ENCODE measurements at regions of chr2 and their contacts with region 1.

Region 1: GRCh38 chr2:43226558-43226954 is at the start of gene ZFP36L2:
- DNase-seq: no peak
- H3K4me3 ChIP-seq: peak within 1 kb of the TSS; percentile 95
- H3K27me3 ChIP-seq: no peaks in the 10 kb centered on the region
- CTCF ChIP-seq: no peak
- polyA plus RNA-seq, gene ZFP36L2: 4.0 and 6.9 TPM in 2 replicates

Region 2: DNA sequence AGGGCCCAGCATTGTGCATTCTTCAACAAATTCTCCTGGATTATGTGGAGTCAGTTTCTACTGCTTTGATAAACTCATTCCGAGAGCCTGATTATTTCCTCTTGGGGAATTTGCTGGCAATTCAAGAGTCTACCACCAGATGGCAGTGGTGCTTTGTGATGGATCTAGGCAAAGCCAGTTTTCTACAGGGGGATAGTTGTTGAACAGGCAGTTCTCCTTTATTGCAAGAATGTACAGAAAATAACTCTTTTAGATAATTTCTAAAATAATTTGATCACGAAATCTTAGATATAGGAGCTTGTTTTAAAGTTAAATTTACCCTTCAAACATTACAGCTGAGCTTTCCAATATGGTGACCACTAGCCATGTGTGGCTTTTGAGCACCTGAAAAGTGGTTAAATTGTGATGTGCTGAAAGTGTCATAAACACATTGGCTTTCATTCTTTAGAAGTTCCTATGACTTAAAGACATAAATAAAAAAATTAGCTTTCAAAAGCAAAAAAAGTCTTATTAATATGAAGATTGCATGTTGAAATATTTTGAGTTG is 367.5 kb before region 1 on chr2:
- CTCF ChIA-PET with region 1: interaction called, 23 read pairs
- POLR2A ChIA-PET with region 1: interaction called, 3 read pairs
- DNase-seq: no peak
- H3K4me3 ChIP-seq: no peak overlapping the region
- H3K27me3 ChIP-seq: no peaks in the 10 kb centered on the region
- CTCF ChIP-seq: peak; percentile 91

Region 3: GRCh38 chr2:42964439-42965083 is 262.0 kb before region 1 on chr2:
- CTCF ChIA-PET with region 1: interaction called, 13 read pairs
- POLR2A ChIA-PET with region 1: no interaction called
- DNase-seq: peak; percentile 85
- H3K4me3 ChIP-seq: no peak overlapping the region
- H3K27me3 ChIP-seq: no peaks in the 10 kb centered on the region
- CTCF ChIP-seq: no peak

Region 4: DNA sequence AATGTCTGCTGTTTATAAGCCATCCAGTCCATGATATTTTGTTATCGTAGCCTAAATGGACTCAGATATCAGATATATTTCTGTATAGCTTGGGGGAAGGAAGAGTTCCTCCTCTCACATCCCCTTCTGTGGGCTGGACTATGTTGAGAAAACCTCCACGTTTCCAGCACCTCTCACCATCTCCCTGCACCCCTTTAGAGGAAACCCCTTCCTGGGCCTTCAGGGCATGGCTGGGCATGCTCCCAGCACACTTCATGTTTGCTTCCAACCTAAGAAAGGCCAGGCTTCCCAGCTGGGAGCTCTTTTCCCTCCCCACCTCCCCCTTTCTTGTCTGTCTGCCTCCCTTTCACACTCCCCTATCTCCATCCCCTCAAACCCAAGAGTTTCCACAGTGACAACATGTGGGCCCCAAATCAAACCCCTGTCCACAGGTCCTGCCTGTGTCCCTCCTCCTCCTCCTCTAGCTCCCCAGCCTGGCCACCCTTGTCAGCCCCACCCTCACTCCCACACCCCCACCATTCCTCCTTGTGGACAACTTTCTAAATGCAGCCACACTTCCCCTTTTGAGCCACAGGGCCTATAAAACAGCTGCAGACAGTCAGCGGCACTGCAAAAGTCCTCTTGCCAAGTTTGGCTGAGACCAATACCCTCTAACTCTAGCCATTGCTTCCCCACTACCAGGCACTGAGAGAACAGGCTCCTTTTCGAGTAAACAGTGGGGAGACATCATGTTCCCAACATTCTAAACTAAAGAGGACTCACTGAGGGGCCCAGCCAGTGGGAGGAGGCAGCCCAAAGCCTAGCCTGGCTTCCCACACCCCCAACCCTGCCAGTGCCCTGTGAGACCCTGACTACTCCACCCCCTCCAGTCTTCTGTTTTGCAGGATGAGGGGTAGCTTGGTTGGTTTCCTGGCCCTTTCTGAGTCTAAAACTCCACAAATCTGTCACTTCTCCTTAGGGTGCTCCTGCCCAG is 120.7 kb before region 1 on chr2:
- CTCF ChIA-PET with region 1: interaction called, 4 read pairs
- POLR2A ChIA-PET with region 1: interaction called, 10 read pairs
- DNase-seq: no peak
- H3K4me3 ChIP-seq: no peak overlapping the region
- H3K27me3 ChIP-seq: no peaks in the 10 kb centered on the region
- CTCF ChIP-seq: peak; percentile 64

Region 5: DNA sequence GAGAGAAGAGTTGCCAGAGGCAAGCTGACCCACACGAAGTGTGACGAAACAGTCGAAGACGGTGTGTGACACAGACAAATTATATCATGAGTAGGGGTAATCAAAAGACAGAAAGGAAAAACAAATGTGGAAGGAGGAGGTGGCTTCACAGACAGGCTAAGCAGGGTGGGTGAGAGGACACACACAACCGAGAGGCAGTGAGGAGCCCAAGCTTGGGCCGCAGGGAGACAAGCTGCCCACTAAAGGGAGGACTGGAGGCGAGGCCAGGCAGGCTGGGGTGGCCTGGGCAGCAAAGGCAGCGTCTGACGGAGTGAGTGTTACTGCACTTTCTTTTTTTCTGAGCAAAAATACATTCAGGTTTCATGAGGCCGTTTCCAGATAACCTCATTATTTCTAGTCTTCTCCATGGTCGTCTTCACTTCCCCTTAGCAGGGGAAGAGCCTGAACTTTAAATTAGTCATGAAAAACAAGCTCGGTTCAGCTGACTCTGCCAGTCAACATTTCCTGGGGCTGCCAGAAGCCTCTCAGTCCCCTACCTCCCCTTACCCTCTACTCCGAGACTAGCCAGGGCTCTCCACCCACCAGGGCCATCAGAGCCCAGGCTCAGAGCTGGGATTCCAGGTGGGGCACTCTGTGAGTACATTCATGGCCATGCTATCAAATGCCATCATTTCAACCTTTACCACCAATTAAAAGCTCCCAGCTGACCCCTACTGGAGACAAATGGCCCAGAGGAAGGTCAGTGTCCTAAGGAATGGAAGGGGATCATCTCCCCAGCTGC is 13.6 kb after region 1 on chr2:
- CTCF ChIA-PET with region 1: interaction called, 19 read pairs
- POLR2A ChIA-PET with region 1: no interaction called
- DNase-seq: no peak
- H3K4me3 ChIP-seq: no peak overlapping the region
- H3K27me3 ChIP-seq: no peaks in the 10 kb centered on the region
- CTCF ChIP-seq: peak; percentile 21; the same call in 1 of the 2 replicates

Region 6: DNA sequence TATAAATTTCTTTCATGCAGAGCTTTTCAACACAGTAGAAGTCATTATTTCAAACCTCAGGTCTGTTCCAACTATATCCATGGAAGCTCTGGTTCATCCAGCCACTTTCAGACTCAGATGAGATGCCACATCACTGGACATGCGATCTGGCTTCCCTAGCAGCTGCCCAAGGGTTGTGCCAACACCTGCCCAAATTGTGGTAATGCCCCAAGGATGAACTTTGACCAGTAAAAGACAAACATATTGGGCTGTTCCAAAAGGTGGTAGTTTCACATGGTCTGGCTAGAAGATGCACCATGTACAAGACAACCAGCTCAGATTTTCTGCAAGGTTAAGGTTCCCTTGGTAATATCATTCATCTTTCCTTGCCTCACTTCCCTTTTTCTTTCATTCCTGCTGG is 267.4 kb after region 1 on chr2:
- CTCF ChIA-PET with region 1: no interaction called
- POLR2A ChIA-PET with region 1: no interaction called
- DNase-seq: no peak
- H3K4me3 ChIP-seq: no peak overlapping the region
- H3K27me3 ChIP-seq: no peaks in the 10 kb centered on the region
- CTCF ChIP-seq: no peak

Region 7: DNA sequence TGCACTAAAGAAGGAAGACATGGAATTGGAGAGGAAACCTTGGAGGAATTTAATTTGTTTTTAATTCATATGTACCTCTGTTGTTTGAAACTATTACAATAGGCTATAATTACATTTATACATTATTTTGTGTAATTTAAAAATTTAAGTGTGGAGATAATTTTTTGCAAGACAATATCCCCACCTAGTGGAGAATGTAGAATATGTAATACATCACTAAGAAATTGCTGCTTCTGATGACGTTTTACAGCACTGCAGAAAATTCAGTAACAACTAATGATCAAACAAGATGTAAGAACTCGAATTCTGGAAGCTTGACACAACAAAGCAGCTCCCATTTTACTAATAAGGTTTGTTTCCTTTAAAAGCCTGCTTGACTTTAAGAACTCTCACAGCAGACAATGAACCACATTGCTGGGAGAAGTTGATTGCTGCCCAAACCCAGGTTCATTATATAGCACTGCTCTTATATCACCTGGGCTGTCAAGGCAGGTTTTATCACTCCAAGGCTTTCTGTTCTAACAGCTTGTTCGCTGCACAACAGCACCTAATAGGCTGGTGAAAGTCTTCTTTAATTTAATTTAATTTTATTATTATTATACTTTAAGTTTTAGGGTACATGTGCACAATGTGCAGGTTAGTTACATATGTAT is 315.9 kb after region 1 on chr2:
- CTCF ChIA-PET with region 1: interaction called, 22 read pairs
- POLR2A ChIA-PET with region 1: interaction called, 3 read pairs
- DNase-seq: no peak
- H3K4me3 ChIP-seq: no peak overlapping the region
- H3K27me3 ChIP-seq: no peaks in the 10 kb centered on the region
- CTCF ChIP-seq: peak; percentile 34

Measured in BJ (cell line).